Activated CD4-positive, alpha-beta memory T cell treated with anti-CD3 and anti-CD28 coated beads for 36 hours (primary cell): ENCODE measurements at regions of chr21 and their contacts with region 1.

Region 1: GRCh38 chr21:42781150-42781970 is 98.0 kb downstream of the WDR4 start:
- DNase-seq: peak; percentile 16
- H3K4me3 Mint-ChIP-seq: peak overlapping the region; percentile 7
- H3K27ac Mint-ChIP-seq: no peak overlapping the region
- H3K4me1 Mint-ChIP-seq: peaks cover 39% of the 10 kb centered on the region
- H3K27me3 Mint-ChIP-seq: peaks cover 11% of the 10 kb centered on the region

Region 2: DNA sequence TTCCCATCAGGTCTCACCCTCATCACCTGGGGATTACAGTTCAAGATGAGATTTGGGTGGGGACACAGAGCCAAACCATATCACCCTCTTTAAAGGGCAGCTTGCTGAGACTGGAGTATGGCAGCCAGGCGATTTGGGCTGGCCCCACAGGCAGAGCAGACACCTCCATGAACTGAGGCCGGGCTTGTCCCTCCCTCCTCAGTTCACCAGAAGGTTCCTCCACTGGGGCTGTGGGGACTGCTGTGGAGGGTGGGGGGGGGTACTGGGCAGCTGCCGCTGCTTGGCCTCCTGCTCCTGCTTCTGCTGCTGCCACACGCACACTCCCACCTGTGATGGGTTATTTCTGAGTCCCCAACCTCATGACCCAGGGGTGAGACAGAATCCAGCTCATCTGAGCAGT is 181.9 kb before region 1 on chr21:
- CTCF ChIA-PET with region 1: no interaction called
- POLR2A ChIA-PET with region 1: no interaction called
- intact Hi-C with region 1: no loop called
- DNase-seq: peak; percentile 7
- H3K4me3 Mint-ChIP-seq: no peak overlapping the region
- H3K27ac Mint-ChIP-seq: no peak overlapping the region
- H3K4me1 Mint-ChIP-seq: no peaks in the 10 kb centered on the region
- H3K27me3 Mint-ChIP-seq: peaks cover 2% of the 10 kb centered on the region

Region 3: GRCh38 chr21:42684109-42684916 is 97.0 kb before region 1 on chr21:
- CTCF ChIA-PET with region 1: no interaction called
- POLR2A ChIA-PET with region 1: no interaction called
- intact Hi-C with region 1: loop called (anchors 1 kb)
- DNase-seq: peak; percentile 77
- H3K4me3 Mint-ChIP-seq: peak overlapping the region; percentile 72
- H3K27ac Mint-ChIP-seq: peak overlapping the region; percentile 88
- H3K4me1 Mint-ChIP-seq: peaks cover 47% of the 10 kb centered on the region
- H3K27me3 Mint-ChIP-seq: peaks cover 4% of the 10 kb centered on the region

Region 4: DNA sequence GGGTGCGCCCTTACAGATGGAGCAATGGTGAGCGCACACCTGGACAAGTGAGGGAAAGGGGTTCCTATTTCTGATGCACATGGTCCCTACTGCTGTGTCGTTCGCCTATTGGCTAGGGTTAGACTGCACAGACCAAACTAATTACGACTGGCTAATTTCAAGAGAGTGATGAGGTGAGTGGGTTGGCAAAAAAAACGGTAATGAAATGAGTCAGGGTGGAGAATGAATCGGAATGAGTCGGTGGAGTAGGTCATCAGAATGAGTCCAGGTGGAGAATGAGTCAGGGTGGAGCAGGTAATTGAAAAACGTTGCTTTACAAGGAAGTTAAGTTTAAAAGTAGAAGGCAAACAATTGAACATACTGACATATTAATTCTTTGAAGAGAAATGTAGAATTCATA is 18.2 kb after region 1 on chr21:
- CTCF ChIA-PET with region 1: no interaction called
- POLR2A ChIA-PET with region 1: no interaction called
- intact Hi-C with region 1: loop called (anchors 2 kb)
- DNase-seq: peak; percentile 71
- H3K4me3 Mint-ChIP-seq: no peak overlapping the region
- H3K27ac Mint-ChIP-seq: peak overlapping the region; percentile 5
- H3K4me1 Mint-ChIP-seq: peaks cover 14% of the 10 kb centered on the region
- H3K27me3 Mint-ChIP-seq: peaks cover 8% of the 10 kb centered on the region